ENCODE measurements at regions of chr17 and their contacts with region 1.

Region 1: GRCh38 chr17:27381007-27381501 is 75.2 kb upstream of the KSR1 start:
- DNase-seq: peak; percentile 79
- ATAC-seq: peak; percentile 95
- H3K4me3 ChIP-seq: no peak overlapping the region
- H3K4me3 Mint-ChIP-seq: no peak overlapping the region
- H3K27ac ChIP-seq: no peak overlapping the region
- H3K27ac Mint-ChIP-seq: no peak overlapping the region
- H3K4me1 ChIP-seq: peaks cover 0 to 4% of the 10 kb centered on the region in 2 donors
- H3K4me1 Mint-ChIP-seq: peaks cover 6% of the 10 kb centered on the region
- H3K27me3 ChIP-seq: peaks cover 0 to 20% (median 3%) of the 10 kb centered on the region in 4 experiments
- H3K27me3 Mint-ChIP-seq: peaks cover 18% of the 10 kb centered on the region
- CTCF ChIP-seq: peak; percentile 97

Region 2: GRCh38 chr17:27245230-27245696 is 135.8 kb before region 1 on chr17:
- CTCF ChIA-PET with region 1: interaction called, 5 read pairs
- POLR2A ChIA-PET with region 1: interaction called, 3 read pairs
- intact Hi-C with region 1: loop called (anchors 1 kb)
- DNase-seq: peak; percentile 79
- ATAC-seq: peak; percentile 97
- H3K4me3 ChIP-seq: no peak overlapping the region
- H3K4me3 Mint-ChIP-seq: peak overlapping the region; percentile 33
- H3K27ac ChIP-seq: no peak overlapping the region
- H3K27ac Mint-ChIP-seq: peak overlapping the region; percentile 53
- H3K4me1 ChIP-seq: peaks cover 9 to 21% of the 10 kb centered on the region in 2 donors
- H3K4me1 Mint-ChIP-seq: peaks cover 27% of the 10 kb centered on the region
- H3K27me3 ChIP-seq: no peaks in the 10 kb centered on the region
- H3K27me3 Mint-ChIP-seq: no peaks in the 10 kb centered on the region
- CTCF ChIP-seq: peak; percentile 74

Measured in B cell (primary cell).